Activated CD4-positive, alpha-beta T cell treated with anti-CD3 and anti-CD28 coated beads for 36 hours (primary cell): ENCODE measurements at regions of chrX and their contacts with region 1.

Region 1: DNA sequence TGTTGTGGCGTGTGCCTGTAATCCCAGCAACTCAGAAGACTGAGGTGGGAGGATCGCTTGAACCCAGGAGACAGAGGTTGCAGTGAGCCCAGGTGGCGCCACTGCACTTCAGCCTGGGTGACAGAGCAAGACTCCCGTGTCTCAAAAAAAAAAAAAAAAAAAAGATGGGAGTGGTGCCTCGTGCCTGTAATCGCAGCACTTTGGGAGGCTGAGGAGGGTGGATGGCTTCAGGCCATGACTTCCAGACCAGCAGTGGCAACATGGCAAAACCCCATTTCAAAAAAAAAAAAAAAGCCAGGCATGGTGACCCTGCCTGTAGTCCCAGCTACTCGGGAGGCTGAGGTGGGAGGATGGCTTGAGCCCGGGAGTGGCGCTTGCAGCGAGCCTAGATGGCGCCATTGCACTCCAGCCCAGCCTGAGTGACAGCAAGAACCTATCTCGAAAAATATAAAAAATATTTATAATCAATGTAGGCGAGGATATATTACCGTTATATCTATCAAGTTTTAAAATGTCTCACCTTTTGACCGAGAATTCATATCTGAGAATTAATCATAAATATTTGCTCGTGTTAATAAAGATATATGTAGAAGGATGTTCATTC is 27.0 kb downstream of the EIF2S3 start:
- DNase-seq: peak; percentile 74
- ATAC-seq: peak; percentile 59
- H3K4me3 Mint-ChIP-seq: no peak overlapping the region
- H3K27ac Mint-ChIP-seq: no peak overlapping the region
- H3K4me1 Mint-ChIP-seq: peaks cover 27% of the 10 kb centered on the region
- H3K27me3 Mint-ChIP-seq: no peaks in the 10 kb centered on the region

Region 2: DNA sequence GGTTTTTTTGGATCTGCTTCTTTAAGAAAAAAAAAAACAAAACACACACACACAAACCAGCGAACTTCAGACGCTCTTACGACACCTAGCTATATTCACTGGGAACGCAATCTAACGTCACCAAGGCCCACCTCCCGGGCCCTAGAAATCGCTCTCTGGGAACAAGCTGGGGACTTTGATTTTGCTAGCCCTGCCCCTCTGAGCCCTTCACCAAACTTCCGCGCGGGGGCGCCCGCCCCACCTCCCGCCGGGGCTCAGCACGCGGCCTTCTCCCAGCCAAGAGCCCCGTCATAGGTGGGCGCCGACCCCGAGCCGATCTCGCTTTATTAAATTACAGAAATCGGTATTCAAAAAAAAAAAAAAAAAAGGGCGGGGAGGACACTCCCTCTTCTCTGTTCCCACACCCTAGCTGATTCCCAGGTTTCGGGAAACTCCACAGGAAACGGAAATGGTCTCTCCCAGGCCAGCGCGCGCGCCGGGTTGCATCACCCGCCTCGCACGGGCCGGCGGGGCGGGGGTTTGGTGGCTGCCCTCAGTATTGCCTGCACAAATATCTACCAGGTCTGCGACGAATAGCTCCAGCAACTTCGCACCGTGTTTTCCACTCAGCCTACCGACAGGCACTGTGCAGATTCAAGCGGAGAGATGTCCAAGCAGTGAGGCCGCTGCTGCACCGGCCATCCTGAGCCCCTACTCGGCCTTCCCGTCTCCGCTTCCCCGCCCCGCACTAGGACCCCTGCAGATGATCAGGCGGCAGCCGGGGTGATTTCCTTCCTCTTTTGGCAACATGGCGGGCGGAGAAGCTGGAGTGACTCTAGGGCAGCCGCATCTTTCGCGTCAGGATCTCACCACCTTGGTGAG is 27.4 kb before region 1 on chrX and contains the start of gene EIF2S3:
- CTCF ChIA-PET with region 1: no interaction called
- POLR2A ChIA-PET with region 1: no interaction called
- intact Hi-C with region 1: loop called in 1 of 2 experiments (anchors 1 kb)
- DNase-seq: peak; percentile 89
- ATAC-seq: peak; percentile 89
- H3K4me3 Mint-ChIP-seq: no peak within 1 kb of the TSS
- H3K27ac Mint-ChIP-seq: no peak within 1 kb of the TSS
- H3K4me1 Mint-ChIP-seq: peaks cover 7% of the 10 kb centered on the region
- H3K27me3 Mint-ChIP-seq: no peaks in the 10 kb centered on the region
- total RNA-seq, gene EIF2S3: 316 to 336 TPM

Region 3: GRCh38 chrX:24169211-24169610 is 87.4 kb after region 1 on chrX:
- CTCF ChIA-PET with region 1: no interaction called
- POLR2A ChIA-PET with region 1: interaction called, 6 read pairs
- intact Hi-C with region 1: loop called (anchors 1 to 5 kb)
- DNase-seq: no peak
- ATAC-seq: peak; percentile 59
- H3K4me3 Mint-ChIP-seq: no peak overlapping the region
- H3K27ac Mint-ChIP-seq: peak overlapping the region; percentile 90
- H3K4me1 Mint-ChIP-seq: peaks cover 60% of the 10 kb centered on the region
- H3K27me3 Mint-ChIP-seq: no peaks in the 10 kb centered on the region

Region 4: GRCh38 chrX:24464836-24465531 is 383.2 kb after region 1 on chrX and contains the start of gene PDK3:
- CTCF ChIA-PET with region 1: no interaction called
- POLR2A ChIA-PET with region 1: no interaction called
- intact Hi-C with region 1: loop called in 1 of 2 experiments (anchors 10 kb)
- DNase-seq: peak; percentile 91
- ATAC-seq: peak; percentile 93
- H3K4me3 Mint-ChIP-seq: peak within 1 kb of the TSS; percentile 79
- H3K27ac Mint-ChIP-seq: peak within 1 kb of the TSS; percentile 88
- H3K4me1 Mint-ChIP-seq: peaks cover 38% of the 10 kb centered on the region
- H3K27me3 Mint-ChIP-seq: no peaks in the 10 kb centered on the region
- total RNA-seq, gene PDK3: 47.4 to 47.7 TPM